Activated CD4-positive, alpha-beta memory T cell treated with anti-CD3 and anti-CD28 coated beads for 36 hours (primary cell): ENCODE measurements at regions of chr17 and their contacts with region 1.

Region 1: GRCh38 chr17:40474419-40475002 is 26.9 kb downstream of the TNS4 start:
- DNase-seq: no peak
- H3K4me3 Mint-ChIP-seq: no peak overlapping the region
- H3K27ac Mint-ChIP-seq: peak overlapping the region; percentile 24
- H3K4me1 Mint-ChIP-seq: peaks cover 19% of the 10 kb centered on the region
- H3K27me3 Mint-ChIP-seq: no peaks in the 10 kb centered on the region

Region 2: DNA sequence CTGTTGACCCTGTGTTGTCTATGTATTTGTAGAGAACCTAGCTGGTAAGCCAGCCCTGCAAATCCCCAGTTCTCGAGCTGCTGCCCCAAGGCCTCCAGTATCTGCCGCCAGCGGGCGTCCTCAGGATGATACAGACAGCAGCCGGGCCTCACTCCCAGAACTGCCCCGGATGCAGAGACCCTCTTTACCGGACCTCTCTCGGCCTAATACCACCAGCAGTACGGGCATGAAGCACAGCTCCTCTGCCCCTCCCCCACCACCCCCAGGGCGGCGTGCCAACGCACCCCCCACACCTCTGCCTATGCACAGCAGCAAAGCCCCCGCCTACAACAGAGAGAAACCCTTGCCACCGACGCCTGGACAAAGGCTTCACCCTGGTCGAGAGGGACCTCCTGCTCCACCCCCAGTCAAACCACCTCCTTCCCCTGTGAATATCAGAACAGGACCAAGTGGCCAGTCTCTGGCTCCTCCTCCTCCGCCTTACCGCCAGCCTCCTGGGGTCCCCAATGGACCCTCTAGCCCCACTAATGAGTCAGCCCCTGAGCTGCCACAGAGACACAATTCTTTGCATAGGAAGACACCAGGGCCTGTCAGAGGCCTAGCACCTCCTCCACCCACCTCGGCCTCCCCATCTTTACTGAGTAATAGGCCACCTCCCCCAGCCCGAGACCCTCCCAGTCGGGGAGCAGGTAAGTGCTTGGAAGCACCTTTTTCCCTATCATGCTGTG is 209.9 kb before region 1 on chr17:
- CTCF ChIA-PET with region 1: no interaction called
- POLR2A ChIA-PET with region 1: no interaction called
- intact Hi-C with region 1: no loop called
- DNase-seq: no peak
- H3K4me3 Mint-ChIP-seq: no peak overlapping the region
- H3K27ac Mint-ChIP-seq: no peak overlapping the region
- H3K4me1 Mint-ChIP-seq: peaks cover 10% of the 10 kb centered on the region
- H3K27me3 Mint-ChIP-seq: no peaks in the 10 kb centered on the region

Region 3: DNA sequence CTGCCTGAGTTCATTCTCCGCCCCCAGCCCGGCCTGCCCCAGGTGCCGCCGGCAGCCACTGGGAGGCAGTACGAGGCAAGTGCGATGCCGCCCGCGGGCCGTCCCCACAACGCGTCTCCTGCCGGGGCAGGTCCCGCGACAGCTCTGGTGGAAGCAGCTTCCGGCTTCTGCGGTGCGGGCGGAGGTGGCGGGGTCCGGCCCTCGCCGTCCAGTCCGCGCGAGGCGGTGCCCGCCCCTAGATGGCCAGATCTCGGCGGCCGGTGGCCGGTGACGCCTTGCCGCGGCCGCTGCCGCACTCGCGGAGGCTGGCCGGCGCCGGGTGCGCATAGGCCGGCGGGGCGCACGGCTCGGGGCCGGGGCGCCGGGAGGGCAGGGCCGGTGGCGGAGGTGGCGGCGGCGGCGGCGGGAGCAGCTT is 111.8 kb before region 1 on chr17:
- CTCF ChIA-PET with region 1: interaction called, 17 read pairs
- POLR2A ChIA-PET with region 1: interaction called, 3 read pairs
- intact Hi-C with region 1: no loop called
- DNase-seq: peak; percentile 93
- H3K4me3 Mint-ChIP-seq: peak overlapping the region; percentile 42
- H3K27ac Mint-ChIP-seq: no peak overlapping the region
- H3K4me1 Mint-ChIP-seq: peaks cover 10% of the 10 kb centered on the region
- H3K27me3 Mint-ChIP-seq: peaks cover 14% of the 10 kb centered on the region

Region 4: GRCh38 chr17:40417609-40418427 is 56.7 kb before region 1 on chr17 and contains the start of gene TOP2A:
- CTCF ChIA-PET with region 1: interaction called, 20 read pairs
- POLR2A ChIA-PET with region 1: no interaction called
- intact Hi-C with region 1: no loop called
- DNase-seq: peak; percentile 98
- H3K4me3 Mint-ChIP-seq: peak within 1 kb of the TSS; percentile 99
- H3K27ac Mint-ChIP-seq: peak within 1 kb of the TSS; percentile 89
- H3K4me1 Mint-ChIP-seq: peaks cover 30% of the 10 kb centered on the region
- H3K27me3 Mint-ChIP-seq: no peaks in the 10 kb centered on the region
- total RNA-seq, gene TOP2A: 301 to 311 TPM

Region 5: DNA sequence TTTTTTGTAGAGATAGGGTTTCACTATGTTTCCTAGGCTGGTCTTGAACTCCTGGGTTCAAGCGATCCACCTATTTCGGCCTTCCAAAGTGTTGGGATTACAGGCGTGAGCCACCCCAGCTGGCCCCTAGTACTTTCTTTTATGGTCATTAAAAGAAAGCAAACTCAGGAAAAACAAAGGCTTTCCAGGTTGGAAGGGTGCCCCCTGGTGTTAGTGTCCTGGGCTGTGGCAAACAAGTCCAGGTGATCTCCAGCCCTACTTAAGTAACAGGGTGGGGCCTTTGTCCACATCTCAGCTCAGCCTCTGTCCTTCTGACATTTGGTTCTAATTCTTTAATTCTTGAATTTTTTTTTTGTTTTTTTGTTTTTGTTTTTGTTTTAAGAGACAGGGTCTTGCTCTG is 24.3 kb before region 1 on chr17:
- CTCF ChIA-PET with region 1: interaction called, 24 read pairs
- POLR2A ChIA-PET with region 1: no interaction called
- intact Hi-C with region 1: no loop called
- DNase-seq: peak; percentile 55
- H3K4me3 Mint-ChIP-seq: no peak overlapping the region
- H3K27ac Mint-ChIP-seq: no peak overlapping the region
- H3K4me1 Mint-ChIP-seq: peaks cover 32% of the 10 kb centered on the region
- H3K27me3 Mint-ChIP-seq: no peaks in the 10 kb centered on the region

Region 6: DNA sequence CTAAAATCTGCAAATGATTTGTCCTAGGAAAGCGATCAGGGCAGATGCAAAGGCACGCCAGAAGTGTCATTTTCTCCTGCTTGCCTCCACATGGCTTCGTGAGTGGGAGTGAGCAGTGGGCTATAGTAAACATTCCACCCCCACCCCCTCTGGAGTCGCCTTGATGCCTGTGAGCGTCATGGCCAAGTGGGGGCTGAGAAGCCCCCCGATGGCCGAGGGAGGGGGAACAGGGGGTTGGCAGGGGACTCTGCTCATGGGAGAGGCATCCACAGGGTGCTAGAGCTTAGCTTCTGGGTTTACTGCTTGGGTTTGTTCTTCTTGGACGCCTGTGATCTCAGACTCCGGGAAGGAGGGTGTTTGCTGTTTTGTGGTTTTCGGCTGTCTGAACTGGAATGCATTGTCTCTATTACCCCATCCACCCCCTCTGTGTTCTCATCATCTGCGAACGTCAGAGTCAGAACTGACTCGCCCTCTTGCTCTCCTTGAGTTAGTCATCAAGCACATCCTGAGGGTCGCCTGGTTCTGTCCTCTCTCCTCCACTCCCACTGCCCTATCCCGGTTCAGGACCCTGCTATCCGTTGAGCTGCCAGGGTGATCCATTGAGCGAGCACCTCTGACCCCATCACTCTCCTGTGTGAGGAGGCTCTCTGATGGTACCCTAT is 11.5 kb after region 1 on chr17:
- CTCF ChIA-PET with region 1: interaction called, 10 read pairs
- POLR2A ChIA-PET with region 1: interaction called, 4 read pairs
- intact Hi-C with region 1: no loop called
- DNase-seq: peak; percentile 76
- H3K4me3 Mint-ChIP-seq: no peak overlapping the region
- H3K27ac Mint-ChIP-seq: peak overlapping the region; percentile 74
- H3K4me1 Mint-ChIP-seq: peaks cover 76% of the 10 kb centered on the region
- H3K27me3 Mint-ChIP-seq: no peaks in the 10 kb centered on the region

Region 7: DNA sequence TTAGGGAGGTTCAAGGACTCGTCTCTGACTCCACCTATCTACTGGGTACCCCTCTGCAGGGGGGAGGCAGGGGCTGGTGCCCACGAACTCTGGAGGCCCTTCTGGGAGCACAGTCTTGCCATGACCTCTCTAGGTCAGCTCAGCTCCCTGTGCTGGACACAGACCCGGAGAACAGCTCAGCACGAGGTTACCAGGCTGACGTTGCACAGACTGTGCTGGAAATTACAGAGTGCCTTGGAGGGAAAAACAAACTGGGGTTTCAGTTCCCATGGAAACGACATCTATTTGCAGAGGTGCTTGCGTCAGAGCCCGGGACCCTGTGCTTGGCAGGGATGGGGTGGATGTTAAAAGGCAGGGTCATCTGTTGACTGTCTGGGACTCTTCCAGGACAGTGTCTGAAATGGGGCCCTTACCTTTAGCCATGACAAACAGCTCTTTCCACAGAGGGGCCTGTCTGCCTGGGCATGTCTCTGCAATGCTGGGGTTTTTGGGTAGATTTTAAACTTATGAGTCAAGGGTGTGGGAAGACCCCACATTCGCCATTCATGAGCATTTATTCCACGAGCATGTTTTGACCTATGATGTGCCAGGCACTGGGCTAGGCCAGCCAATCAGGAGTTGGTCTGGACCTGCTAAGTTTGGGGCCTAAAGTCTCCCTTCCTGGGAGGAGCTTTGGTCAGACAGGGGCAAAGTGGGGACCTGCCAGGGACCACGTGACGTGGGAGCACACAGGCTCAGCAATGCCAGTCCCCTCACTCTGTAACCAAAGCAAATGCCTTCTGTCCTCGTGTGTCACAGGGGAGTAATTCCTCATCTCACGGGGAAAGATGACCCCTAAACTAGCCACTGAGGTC is 68.3 kb after region 1 on chr17:
- CTCF ChIA-PET with region 1: interaction called, 10 read pairs
- POLR2A ChIA-PET with region 1: interaction called, 5 read pairs
- intact Hi-C with region 1: no loop called
- DNase-seq: peak; percentile 76
- H3K4me3 Mint-ChIP-seq: peak overlapping the region; percentile 56
- H3K27ac Mint-ChIP-seq: peak overlapping the region; percentile 90
- H3K4me1 Mint-ChIP-seq: peaks cover 78% of the 10 kb centered on the region
- H3K27me3 Mint-ChIP-seq: no peaks in the 10 kb centered on the region